Heart left ventricle (tissue), 16 donors: ENCODE measurements at regions of chr5 and their contacts with region 1.

Region 1: DNA sequence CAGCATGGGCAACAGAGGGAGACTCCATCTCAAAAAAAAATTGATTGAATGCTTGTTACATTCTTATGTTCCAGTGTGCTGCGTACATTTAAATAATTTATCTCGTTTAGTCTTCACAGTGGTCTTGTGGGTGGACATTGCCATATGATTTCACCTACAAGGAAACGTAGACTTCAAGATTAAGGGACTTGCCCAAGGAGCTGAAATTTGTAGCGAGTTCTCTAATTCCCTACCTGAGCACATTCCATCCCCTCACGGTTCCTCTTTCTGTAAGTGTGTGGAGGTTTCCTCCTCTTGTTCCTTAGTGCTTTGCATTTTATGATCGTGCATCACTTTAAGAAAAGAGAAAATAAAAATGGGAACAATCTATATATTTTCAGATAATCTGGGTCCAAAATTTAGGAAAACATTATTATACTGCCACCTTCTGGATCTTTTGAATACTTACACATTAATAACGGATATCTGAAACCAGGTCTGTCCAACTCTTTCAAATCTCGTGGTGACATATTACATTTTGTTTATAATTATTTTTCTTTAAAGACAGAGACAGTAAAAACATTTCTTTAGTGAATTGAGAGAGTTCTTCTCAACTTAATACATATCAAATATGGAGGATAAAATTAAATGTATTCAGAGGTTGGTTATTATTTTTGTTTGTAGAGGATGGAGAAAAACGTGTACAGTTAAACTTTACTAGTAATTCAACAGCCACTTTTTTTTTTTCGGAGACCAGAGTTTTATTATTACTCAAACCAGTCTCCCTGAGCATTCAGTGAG is 29.9 kb upstream of the C7 start:
- DNase-seq: no peak
- ATAC-seq: no peak
- H3K4me3 ChIP-seq: no peak overlapping the region
- H3K27ac ChIP-seq: no peak overlapping the region
- H3K4me1 ChIP-seq: peaks cover 0 to 4% (median 0%) of the 10 kb centered on the region in 12 donors
- H3K27me3 ChIP-seq: no peaks in the 10 kb centered on the region
- CTCF ChIP-seq: peak; percentile 47 to 72 (median 64)
- POLR2A ChIP-seq: no peak

Region 2: GRCh38 chr5:39578887-39579497 is 1300.4 kb before region 1 on chr5:
- intact Hi-C with region 1: loop called in 5 of 10 experiments (anchors 5 to 10 kb)
- DNase-seq: no peak
- ATAC-seq: no peak
- H3K4me3 ChIP-seq: no peak overlapping the region
- H3K27ac ChIP-seq: no peak overlapping the region
- H3K4me1 ChIP-seq: peaks cover 0 to 22% (median 0%) of the 10 kb centered on the region in 12 donors
- H3K27me3 ChIP-seq: no peaks in the 10 kb centered on the region
- CTCF ChIP-seq: peak; percentile 60 to 84 (median 70)
- POLR2A ChIP-seq: no peak

Region 3: GRCh38 chr5:39948867-39949468 is 930.4 kb before region 1 on chr5:
- intact Hi-C with region 1: loop called in 2 of 10 experiments (anchors 5 to 10 kb)
- DNase-seq: peak in 4 of 5 donors; percentile 31 to 54 (median 46)
- ATAC-seq: peak in 3 of 4 donors; percentile 45 to 78 (median 73)
- H3K4me3 ChIP-seq: no peak overlapping the region
- H3K27ac ChIP-seq: no peak overlapping the region
- H3K4me1 ChIP-seq: peaks cover 0 to 10% (median 0%) of the 10 kb centered on the region in 12 donors
- H3K27me3 ChIP-seq: no peaks in the 10 kb centered on the region
- CTCF ChIP-seq: peak; percentile 43 to 83 (median 71)
- POLR2A ChIP-seq: no peak

Region 4: GRCh38 chr5:40812125-40812524 is 67.2 kb before region 1 on chr5:
- intact Hi-C with region 1: no loop called
- DNase-seq: no peak
- ATAC-seq: no peak
- H3K4me3 ChIP-seq: no peak overlapping the region
- H3K27ac ChIP-seq: no peak overlapping the region
- H3K4me1 ChIP-seq: no peaks in the 10 kb centered on the region
- H3K27me3 ChIP-seq: no peaks in the 10 kb centered on the region
- CTCF ChIP-seq: no peak
- POLR2A ChIP-seq: no peak

Region 5: GRCh38 chr5:40834849-40835787 is 44.2 kb before region 1 on chr5 and contains the start of gene RPL37:
- intact Hi-C with region 1: loop called in 2 of 10 experiments (anchors 5 kb)
- DNase-seq: peak; percentile 97 to 98 (median 97)
- ATAC-seq: peak; percentile 99 to 100 (median 100)
- H3K4me3 ChIP-seq: peak within 1 kb of the TSS; percentile 64 to 82 (median 74)
- H3K27ac ChIP-seq: peak within 1 kb of the TSS; percentile 93 to 99 (median 98)
- H3K4me1 ChIP-seq: peaks cover 0 to 40% (median 23%) of the 10 kb centered on the region in 12 donors
- H3K27me3 ChIP-seq: no peaks in the 10 kb centered on the region
- CTCF ChIP-seq: no peak
- POLR2A ChIP-seq: peak in 1 of 2 donors; percentile 75
- total RNA-seq, gene RPL37: 32.7 to 838 (median 595) TPM